H1 (cell line): ENCODE measurements at regions of chr18 and their contacts with region 1.

Region 1: DNA sequence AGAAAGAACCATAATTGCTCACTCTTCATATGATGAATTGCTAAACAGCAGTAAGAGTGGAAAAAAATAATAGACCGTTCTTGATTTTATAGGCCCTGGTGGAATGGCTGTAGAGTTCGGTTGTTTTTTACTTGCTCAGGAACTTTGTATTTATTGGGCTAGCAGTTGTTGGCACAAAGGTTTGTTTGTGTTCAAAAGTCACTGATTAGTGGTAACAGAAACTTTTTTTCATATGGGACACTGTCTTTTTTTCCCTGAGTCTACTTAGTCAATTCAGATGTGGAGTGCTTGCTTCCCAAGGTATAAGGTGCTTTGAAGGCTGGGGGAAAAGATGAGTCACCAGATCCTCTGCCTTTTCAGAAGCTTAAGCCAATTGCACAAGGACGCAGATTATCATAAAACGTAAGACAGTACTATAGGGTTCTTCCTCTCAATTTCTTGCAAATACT is 25.8 kb downstream of the PHLPP1 start:
- DNase-seq: no peak
- H3K4me3 ChIP-seq: no peak overlapping the region
- H3K27ac ChIP-seq: no peak overlapping the region
- H3K4me1 ChIP-seq: peaks cover 2 to 41% (median 27%) of the 10 kb centered on the region in 4 experiments
- H3K27me3 ChIP-seq: no peaks in the 10 kb centered on the region
- CTCF ChIP-seq: no peak
- EP300 ChIP-seq: no peak
- POLR2A ChIP-seq: no peak
- RAD21 ChIP-seq: no peak

Region 2: GRCh38 chr18:62751341-62751821 is 10.2 kb after region 1 on chr18:
- CTCF ChIA-PET with region 1: interaction called, 4 read pairs
- POLR2A ChIA-PET with region 1: interaction called, 11 read pairs
- DNase-seq: peak in 1 of 2 experiments; percentile 68
- H3K4me3 ChIP-seq: peak overlapping the region in 2 of 4 experiments; percentile 2 to 40; a peak in 4 of 8 replicates
- H3K27ac ChIP-seq: peak overlapping the region; percentile 64
- H3K4me1 ChIP-seq: peaks cover 4 to 29% (median 23%) of the 10 kb centered on the region in 4 experiments
- H3K27me3 ChIP-seq: no peaks in the 10 kb centered on the region
- CTCF ChIP-seq: no peak
- EP300 ChIP-seq: peak in 1 of 2 experiments; percentile 83; a peak in 2 of 3 replicates
- POLR2A ChIP-seq: no peak
- RAD21 ChIP-seq: no peak

Region 3: GRCh38 chr18:62883937-62884735 is 143.0 kb after region 1 on chr18:
- CTCF ChIA-PET with region 1: no interaction called
- POLR2A ChIA-PET with region 1: no interaction called
- DNase-seq: no peak
- H3K4me3 ChIP-seq: no peak overlapping the region
- H3K27ac ChIP-seq: no peak overlapping the region
- H3K4me1 ChIP-seq: peaks cover 0 to 25% (median 13%) of the 10 kb centered on the region in 4 experiments
- H3K27me3 ChIP-seq: no peaks in the 10 kb centered on the region
- CTCF ChIP-seq: no peak
- EP300 ChIP-seq: no peak
- POLR2A ChIP-seq: no peak
- RAD21 ChIP-seq: no peak